CD8-positive, alpha-beta T cell (primary cell): ENCODE measurements at regions of chr1 and their contacts with region 1.

Region 1: GRCh38 chr1:92968138-92969032 is 7.1 kb upstream of the DIPK1A start:
- DNase-seq: peak in 4 of 9 experiments; percentile 22 to 72 (median 43)
- ATAC-seq: peak; percentile 59
- H3K4me3 ChIP-seq: no peak overlapping the region
- H3K4me3 Mint-ChIP-seq: no peak overlapping the region
- H3K27ac ChIP-seq: no peak overlapping the region
- H3K27ac Mint-ChIP-seq: no peak overlapping the region
- H3K4me1 ChIP-seq: peaks cover 37% of the 10 kb centered on the region
- H3K4me1 Mint-ChIP-seq: peaks cover 20% of the 10 kb centered on the region
- H3K27me3 ChIP-seq: no peaks in the 10 kb centered on the region
- H3K27me3 Mint-ChIP-seq: no peaks in the 10 kb centered on the region
- CTCF ChIP-seq: peak; percentile 84

Region 2: DNA sequence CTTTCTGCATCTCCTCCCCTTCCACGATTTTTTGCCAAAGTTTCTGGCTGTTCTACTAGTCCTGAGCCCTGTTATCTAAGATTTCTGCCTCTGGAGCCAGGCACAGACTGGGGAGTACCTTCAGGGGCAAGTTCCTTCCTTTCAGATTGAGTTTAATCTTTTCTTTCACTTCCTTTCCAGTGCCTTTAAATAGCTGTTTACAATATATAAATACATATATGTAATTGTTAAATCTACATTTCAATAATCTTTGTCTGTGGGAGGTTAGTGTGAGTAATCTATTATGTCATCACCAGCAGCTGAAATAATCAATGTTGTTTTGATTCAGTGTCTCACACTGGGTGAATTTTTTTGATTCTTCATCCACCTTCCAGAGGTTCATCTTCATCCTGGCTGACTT is 38.9 kb before region 1 on chr1:
- CTCF ChIA-PET with region 1: no interaction called
- POLR2A ChIA-PET with region 1: no interaction called
- intact Hi-C with region 1: no loop called
- DNase-seq: no peak
- ATAC-seq: no peak
- H3K4me3 ChIP-seq: no peak overlapping the region
- H3K4me3 Mint-ChIP-seq: no peak overlapping the region
- H3K27ac ChIP-seq: no peak overlapping the region
- H3K27ac Mint-ChIP-seq: no peak overlapping the region
- H3K4me1 ChIP-seq: peaks cover 6% of the 10 kb centered on the region
- H3K4me1 Mint-ChIP-seq: peaks cover 48% of the 10 kb centered on the region
- H3K27me3 ChIP-seq: no peaks in the 10 kb centered on the region
- H3K27me3 Mint-ChIP-seq: no peaks in the 10 kb centered on the region
- CTCF ChIP-seq: no peak

Region 3: GRCh38 chr1:92951141-92951582 is 17.2 kb before region 1 on chr1:
- CTCF ChIA-PET with region 1: interaction called, 11 read pairs
- POLR2A ChIA-PET with region 1: interaction called, 3 read pairs
- intact Hi-C with region 1: no loop called
- DNase-seq: peak in 2 of 9 experiments; percentile 39 to 62
- ATAC-seq: peak; percentile 77
- H3K4me3 ChIP-seq: no peak overlapping the region
- H3K4me3 Mint-ChIP-seq: no peak overlapping the region
- H3K27ac ChIP-seq: peak overlapping the region in 1 of 2 experiments; percentile 4
- H3K27ac Mint-ChIP-seq: no peak overlapping the region
- H3K4me1 ChIP-seq: peaks cover 38% of the 10 kb centered on the region
- H3K4me1 Mint-ChIP-seq: peaks cover 39% of the 10 kb centered on the region
- H3K27me3 ChIP-seq: no peaks in the 10 kb centered on the region
- H3K27me3 Mint-ChIP-seq: no peaks in the 10 kb centered on the region
- CTCF ChIP-seq: no peak

Region 4: GRCh38 chr1:92980732-92981647 is 12.6 kb after region 1 on chr1:
- CTCF ChIA-PET with region 1: interaction called, 32 read pairs
- POLR2A ChIA-PET with region 1: interaction called, 72 read pairs
- intact Hi-C with region 1: loop called (anchors 1 kb)
- DNase-seq: peak; percentile 20 to 93 (median 48)
- ATAC-seq: peak; percentile 93
- H3K4me3 ChIP-seq: peak overlapping the region in 1 of 2 experiments; percentile 12
- H3K4me3 Mint-ChIP-seq: peak overlapping the region; percentile 66
- H3K27ac ChIP-seq: peak overlapping the region; percentile 72 to 93
- H3K27ac Mint-ChIP-seq: peak overlapping the region; percentile 96
- H3K4me1 ChIP-seq: peaks cover 23% of the 10 kb centered on the region
- H3K4me1 Mint-ChIP-seq: peaks cover 25% of the 10 kb centered on the region
- H3K27me3 ChIP-seq: no peaks in the 10 kb centered on the region
- H3K27me3 Mint-ChIP-seq: no peaks in the 10 kb centered on the region
- CTCF ChIP-seq: no peak

Region 5: GRCh38 chr1:93000751-93001175 is 32.4 kb after region 1 on chr1:
- CTCF ChIA-PET with region 1: interaction called, 29 read pairs
- POLR2A ChIA-PET with region 1: no interaction called
- intact Hi-C with region 1: no loop called
- DNase-seq: no peak
- ATAC-seq: no peak
- H3K4me3 ChIP-seq: no peak overlapping the region
- H3K4me3 Mint-ChIP-seq: no peak overlapping the region
- H3K27ac ChIP-seq: no peak overlapping the region
- H3K27ac Mint-ChIP-seq: no peak overlapping the region
- H3K4me1 ChIP-seq: no peaks in the 10 kb centered on the region
- H3K4me1 Mint-ChIP-seq: peaks cover 4% of the 10 kb centered on the region
- H3K27me3 ChIP-seq: no peaks in the 10 kb centered on the region
- H3K27me3 Mint-ChIP-seq: peaks cover 4% of the 10 kb centered on the region
- CTCF ChIP-seq: no peak

Region 6: DNA sequence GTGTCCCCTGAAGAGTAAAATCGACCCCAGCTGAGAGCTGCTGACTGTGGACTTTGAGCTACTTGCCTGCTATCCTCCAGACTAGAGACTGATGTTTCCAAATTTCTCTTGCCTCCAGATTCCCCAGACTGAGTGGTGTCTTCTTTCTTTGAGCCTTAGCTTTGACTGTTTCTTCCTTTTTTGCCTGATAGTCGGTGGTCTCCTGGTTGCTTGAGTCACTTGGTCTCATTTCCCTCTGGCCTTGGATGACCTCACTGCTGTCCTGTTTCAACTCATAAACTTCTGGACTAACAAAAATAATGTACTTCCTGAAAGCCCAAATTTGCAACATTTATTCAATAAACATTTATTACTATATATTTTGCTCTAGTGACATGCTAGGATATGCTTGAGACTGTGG is 45.8 kb after region 1 on chr1:
- CTCF ChIA-PET with region 1: interaction called, 10 read pairs
- POLR2A ChIA-PET with region 1: no interaction called
- intact Hi-C with region 1: no loop called
- DNase-seq: no peak
- ATAC-seq: no peak
- H3K4me3 ChIP-seq: no peak overlapping the region
- H3K4me3 Mint-ChIP-seq: no peak overlapping the region
- H3K27ac ChIP-seq: no peak overlapping the region
- H3K27ac Mint-ChIP-seq: no peak overlapping the region
- H3K4me1 ChIP-seq: no peaks in the 10 kb centered on the region
- H3K4me1 Mint-ChIP-seq: no peaks in the 10 kb centered on the region
- H3K27me3 ChIP-seq: no peaks in the 10 kb centered on the region
- H3K27me3 Mint-ChIP-seq: peaks cover 9% of the 10 kb centered on the region
- CTCF ChIP-seq: no peak